ACHN (cell line): ENCODE measurements at regions of chr12 and their contacts with region 1.

Region 1: DNA sequence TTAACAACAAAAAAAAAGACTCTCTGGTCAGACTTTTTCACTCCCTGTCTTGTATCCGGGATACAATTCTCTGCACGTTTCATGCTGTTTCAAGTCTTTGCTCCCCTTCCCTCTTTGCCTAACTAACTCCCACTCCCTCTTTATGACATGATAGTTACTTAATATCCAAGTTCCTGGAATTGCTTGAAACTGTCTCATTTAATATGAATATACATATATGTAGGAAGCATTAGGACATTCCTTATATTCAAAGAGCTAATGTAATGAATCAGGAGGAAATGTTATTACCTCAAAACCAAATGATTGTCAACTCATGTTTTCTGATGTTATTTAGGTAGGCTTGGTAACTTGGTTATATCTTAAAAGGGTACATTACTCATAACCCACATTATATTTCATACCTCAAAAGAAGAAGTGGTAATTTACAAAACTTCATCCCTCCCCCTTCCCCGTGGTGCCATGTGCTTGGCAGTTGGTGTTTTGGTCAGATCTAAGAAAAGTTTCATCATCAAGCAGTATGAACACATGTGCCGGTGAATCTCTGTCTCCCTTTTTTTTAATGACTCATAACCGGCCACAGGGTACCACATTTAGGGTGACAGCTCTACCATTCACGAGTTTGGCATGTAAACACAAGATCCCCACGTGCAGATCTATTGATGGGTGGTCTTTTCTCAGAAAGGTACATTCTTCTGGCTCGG is 56.5 kb downstream of the HCAR2 start:
- DNase-seq: no peak

Region 2: GRCh38 chr12:122752464-122753318 is 106.0 kb after region 1 on chr12 and contains the start of gene DENR:
- in situ Hi-C with region 1: loop called (anchors 25 kb)
- DNase-seq: peak; percentile 100

Region 3: DNA sequence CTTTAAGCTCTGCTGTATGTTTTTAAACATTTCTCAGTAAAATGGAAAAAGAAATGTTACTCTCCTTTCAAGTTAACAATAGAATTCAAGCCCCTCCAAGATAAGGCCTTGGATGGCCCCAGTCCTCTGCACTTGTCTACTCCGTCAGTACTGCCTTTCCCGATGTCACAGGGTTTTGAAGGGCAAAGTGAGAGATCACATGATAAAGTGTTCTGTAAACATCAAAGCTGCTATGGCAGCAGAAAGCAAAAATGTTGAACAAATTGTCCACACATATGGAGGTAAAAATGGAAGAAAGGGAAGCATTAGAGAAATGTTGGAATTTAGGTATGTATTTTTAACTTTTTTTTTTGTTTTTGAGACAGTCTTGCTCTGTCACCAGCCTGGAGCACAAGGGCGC is 658.5 kb after region 1 on chr12:
- in situ Hi-C with region 1: no loop called
- DNase-seq: no peak